Aorta (tissue), 5 donors: ENCODE measurements at regions of chr3 and their contacts with region 1.

Region 1: GRCh38 chr3:10205451-10206165 is 40.9 kb downstream of the IRAK2 start:
- DNase-seq: peak; percentile 91 to 93
- ATAC-seq: peak; percentile 82
- H3K4me3 ChIP-seq: no peak overlapping the region
- H3K27ac ChIP-seq: peak overlapping the region; percentile 62 to 79
- H3K4me1 ChIP-seq: peaks cover 0 to 4% of the 10 kb centered on the region in 2 donors
- H3K27me3 ChIP-seq: no peaks in the 10 kb centered on the region

Region 2: DNA sequence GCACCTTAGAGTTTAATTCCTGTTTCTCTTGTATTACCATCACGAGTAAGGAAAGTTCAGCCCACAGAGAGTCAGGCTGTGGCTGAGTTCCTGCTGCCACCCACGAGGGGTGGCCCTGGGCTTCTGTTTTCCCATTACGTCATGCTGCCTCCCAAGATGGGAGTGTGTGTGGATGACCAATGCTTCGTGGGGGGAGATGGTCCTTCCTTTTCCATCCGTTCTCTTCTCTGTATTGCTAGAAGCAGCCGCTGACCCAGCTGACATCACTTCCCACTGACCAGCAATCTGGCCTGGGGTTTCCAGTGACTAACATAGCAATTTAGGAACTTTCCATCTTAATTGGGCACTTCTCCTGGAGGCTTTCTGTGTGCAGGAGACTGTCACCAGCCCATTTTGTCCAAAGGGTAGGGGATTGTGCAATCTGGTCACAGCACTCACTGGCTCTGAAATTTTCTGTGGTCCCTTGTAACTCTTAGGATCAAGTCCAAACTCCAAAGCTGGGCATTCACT is 31.6 kb before region 1 on chr3:
- intact Hi-C with region 1: loop called in 1 of 2 experiments (anchors 5 kb)
- DNase-seq: peak; percentile 92 to 95
- ATAC-seq: peak; percentile 93
- H3K4me3 ChIP-seq: no peak overlapping the region
- H3K27ac ChIP-seq: peak overlapping the region; percentile 69 to 97
- H3K4me1 ChIP-seq: peaks cover 0 to 5% of the 10 kb centered on the region in 2 donors
- H3K27me3 ChIP-seq: no peaks in the 10 kb centered on the region

Region 3: DNA sequence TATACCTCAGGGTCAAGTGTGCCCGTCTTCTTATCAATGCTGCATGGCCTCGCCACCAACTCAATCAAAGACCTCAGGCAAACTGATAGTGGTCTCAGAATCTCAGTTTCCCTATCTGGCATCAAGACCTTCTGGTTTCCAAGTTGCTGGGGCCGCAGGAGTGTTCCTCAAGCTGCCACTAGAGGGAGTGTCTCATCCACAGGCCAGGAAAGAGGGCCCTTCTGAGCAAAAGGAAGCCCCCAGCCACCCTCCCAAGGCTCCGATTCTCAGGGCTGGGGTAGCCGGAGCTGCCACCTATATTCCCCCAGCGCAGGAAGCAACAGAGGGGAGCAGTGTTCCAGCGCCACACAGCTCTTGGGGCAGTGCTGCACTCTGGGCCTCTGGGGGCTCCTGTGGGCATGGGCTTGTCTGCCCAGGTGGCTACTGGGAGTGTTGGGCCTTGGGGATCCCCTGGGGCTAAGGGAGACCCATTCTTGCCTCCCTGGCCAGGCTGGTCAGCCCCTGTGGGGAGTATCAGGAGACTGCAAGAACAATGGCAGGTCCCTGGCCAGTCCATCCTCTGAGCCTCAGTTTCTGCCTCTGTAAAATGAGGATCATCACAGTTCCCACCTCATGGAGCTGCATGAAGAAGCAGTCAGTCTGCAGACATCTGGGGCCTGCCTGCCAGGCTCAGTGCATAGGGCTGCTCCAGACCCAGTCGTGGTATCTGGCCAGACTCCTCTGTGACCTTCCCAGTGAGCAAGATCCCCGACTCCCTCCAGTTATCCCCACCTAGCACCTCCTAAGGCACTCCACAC is 138.7 kb after region 1 on chr3:
- intact Hi-C with region 1: no loop called
- DNase-seq: peak in 1 of 2 donors; percentile 77
- ATAC-seq: no peak
- H3K4me3 ChIP-seq: no peak overlapping the region
- H3K27ac ChIP-seq: no peak overlapping the region
- H3K4me1 ChIP-seq: no peaks in the 10 kb centered on the region
- H3K27me3 ChIP-seq: no peaks in the 10 kb centered on the region

Region 4: DNA sequence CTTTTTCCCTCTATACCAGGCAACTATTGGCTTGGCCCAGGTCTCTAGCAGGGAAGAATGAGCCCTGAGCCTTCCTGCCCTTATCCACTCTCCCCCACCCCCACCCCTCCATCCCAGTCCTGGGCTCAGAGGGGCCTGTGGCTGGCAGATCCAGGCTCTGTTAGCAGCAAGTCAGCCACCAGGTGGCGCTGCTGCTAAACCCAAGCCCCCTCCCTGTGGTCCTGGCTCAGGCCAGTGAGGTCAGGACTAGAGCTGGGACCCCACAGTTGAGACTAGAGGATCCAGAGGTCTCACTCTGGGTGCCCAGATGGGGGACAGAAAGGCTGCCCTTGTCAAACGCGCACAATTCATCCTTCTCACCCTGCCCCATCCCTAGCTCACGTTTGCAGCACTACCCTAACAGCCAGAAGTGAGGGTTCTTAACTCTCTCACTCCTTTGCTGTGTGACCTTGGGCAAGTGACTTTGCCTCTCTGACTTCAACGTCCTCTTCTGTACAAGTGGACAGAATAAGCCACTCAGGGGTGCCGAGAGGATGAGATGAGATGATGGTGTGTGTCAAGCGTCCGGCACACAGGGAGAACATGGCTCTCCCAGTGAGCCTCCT is 740.2 kb after region 1 on chr3:
- intact Hi-C with region 1: no loop called
- DNase-seq: peak; percentile 68 to 88
- ATAC-seq: peak; percentile 80
- H3K4me3 ChIP-seq: no peak overlapping the region
- H3K27ac ChIP-seq: no peak overlapping the region
- H3K4me1 ChIP-seq: no peaks in the 10 kb centered on the region
- H3K27me3 ChIP-seq: no peaks in the 10 kb centered on the region